Activated naive CD4-positive, alpha-beta T cell treated with anti-CD3 and anti-CD28 coated beads for 36 hours (primary cell): ENCODE measurements at regions of chr16 and their contacts with region 1.

Region 1: GRCh38 chr16:57226701-57227621 is 18.1 kb upstream of the ARL2BP start:
- DNase-seq: no peak
- H3K4me3 Mint-ChIP-seq: no peak overlapping the region
- H3K27ac Mint-ChIP-seq: no peak overlapping the region
- H3K4me1 Mint-ChIP-seq: no peaks in the 10 kb centered on the region
- H3K27me3 Mint-ChIP-seq: no peaks in the 10 kb centered on the region

Region 2: DNA sequence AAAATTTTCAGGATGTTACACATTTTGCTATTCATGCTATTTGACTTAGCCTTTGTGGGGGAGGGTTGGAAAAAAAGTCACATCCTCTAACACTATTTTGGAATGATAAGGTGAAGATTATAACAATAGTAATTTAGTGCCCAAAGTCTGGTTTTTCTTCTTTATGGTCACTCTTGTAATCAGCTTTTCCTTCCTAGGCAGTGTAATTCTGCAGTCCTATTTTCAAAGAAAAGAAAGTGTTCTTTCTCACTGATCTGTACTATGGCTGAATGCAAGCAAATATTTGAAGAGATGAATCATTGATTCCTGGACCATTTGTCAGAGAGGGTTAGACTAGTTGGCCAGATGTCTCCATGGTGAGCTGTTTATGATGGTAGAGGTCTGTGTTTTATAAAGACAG is 32.4 kb before region 1 on chr16:
- CTCF ChIA-PET with region 1: no interaction called
- intact Hi-C with region 1: loop called (anchors 5 kb)
- DNase-seq: no peak
- H3K4me3 Mint-ChIP-seq: no peak overlapping the region
- H3K27ac Mint-ChIP-seq: no peak overlapping the region
- H3K4me1 Mint-ChIP-seq: peaks cover 40% of the 10 kb centered on the region
- H3K27me3 Mint-ChIP-seq: no peaks in the 10 kb centered on the region